Endothelial cell of umbilical vein (primary cell): ENCODE measurements at regions of chr14 and their contacts with region 1.

Region 1: DNA sequence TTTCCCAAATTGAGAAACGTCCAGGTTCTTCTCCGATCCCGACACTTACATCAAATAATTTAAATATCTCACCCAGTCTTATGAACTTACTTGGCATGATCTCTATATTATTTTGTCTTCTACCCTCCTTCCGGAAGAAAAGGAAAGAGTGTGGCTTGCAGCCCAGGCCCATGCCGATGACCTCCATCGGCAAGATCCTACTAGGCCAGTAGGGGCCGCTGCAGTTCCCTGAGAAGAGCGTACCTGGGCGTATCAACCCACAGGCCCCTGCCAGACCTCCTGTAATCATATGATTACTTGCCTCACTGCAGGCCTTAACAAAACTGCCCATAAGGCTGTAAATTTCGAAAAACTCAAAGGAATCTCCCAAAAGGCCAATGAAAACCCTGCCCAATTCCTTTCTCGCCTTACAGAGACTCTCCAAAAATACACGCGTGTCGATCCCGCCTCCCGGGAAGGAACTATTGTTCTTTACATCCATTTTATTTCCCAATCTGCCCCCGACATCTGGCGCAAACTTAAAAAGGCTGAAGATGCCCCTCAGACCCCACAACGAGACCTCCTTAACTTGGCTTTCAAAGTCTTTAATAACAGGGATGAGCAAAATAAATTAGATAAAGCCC is 69.6 kb downstream of the MOK start:
- DNase-seq: peak; percentile 72
- H3K4me3 ChIP-seq: no peak overlapping the region
- H3K27ac ChIP-seq: no peak overlapping the region
- H3K4me1 ChIP-seq: peaks cover 3% of the 10 kb centered on the region
- H3K27me3 ChIP-seq: no peaks in the 10 kb centered on the region
- CTCF ChIP-seq: peak; percentile 84 to 89
- POLR2A ChIP-seq: no peak

Region 2: DNA sequence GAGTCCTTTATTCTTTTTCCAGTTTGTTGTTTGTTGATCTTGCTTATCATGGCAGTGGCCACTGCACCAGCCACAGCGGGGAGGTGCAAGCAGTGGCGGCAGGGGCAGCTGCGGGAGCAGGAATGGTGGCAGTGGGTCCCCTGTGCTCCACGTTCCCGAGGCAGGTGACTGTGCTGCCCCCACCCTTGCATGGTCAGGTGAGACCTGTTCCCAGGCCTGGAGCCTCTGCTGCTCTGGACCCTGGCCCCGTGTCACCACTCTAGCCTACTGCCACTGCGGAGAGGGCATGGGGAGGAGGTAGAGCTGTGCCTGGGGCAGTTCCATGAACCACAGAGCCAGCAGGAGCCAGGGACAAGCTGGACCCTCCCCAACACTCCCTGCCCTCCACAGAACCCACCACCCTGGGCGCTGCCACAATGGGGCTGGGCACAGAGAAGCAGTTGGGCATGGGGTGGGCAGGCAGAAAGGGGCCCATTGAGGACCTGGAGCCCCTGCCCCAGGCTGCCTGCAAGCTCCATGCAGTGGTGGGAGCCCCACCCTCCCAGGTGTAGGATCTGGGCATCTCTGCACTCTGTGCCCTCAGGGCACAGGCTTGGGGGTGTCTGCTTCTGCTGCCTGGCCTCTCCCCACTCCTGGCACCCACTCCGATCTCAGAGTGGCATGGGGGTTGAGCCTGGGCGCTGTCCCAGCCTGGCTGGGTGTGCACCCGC is 118.9 kb before region 1 on chr14:
- CTCF ChIA-PET with region 1: no interaction called
- POLR2A ChIA-PET with region 1: no interaction called
- dilution Hi-C with region 1: no loop called
- intact Hi-C with region 1: no loop called
- DNase-seq: no peak
- H3K4me3 ChIP-seq: no peak overlapping the region
- H3K27ac ChIP-seq: no peak overlapping the region
- H3K4me1 ChIP-seq: no peaks in the 10 kb centered on the region
- H3K27me3 ChIP-seq: no peaks in the 10 kb centered on the region
- CTCF ChIP-seq: no peak
- POLR2A ChIP-seq: no peak

Region 3: DNA sequence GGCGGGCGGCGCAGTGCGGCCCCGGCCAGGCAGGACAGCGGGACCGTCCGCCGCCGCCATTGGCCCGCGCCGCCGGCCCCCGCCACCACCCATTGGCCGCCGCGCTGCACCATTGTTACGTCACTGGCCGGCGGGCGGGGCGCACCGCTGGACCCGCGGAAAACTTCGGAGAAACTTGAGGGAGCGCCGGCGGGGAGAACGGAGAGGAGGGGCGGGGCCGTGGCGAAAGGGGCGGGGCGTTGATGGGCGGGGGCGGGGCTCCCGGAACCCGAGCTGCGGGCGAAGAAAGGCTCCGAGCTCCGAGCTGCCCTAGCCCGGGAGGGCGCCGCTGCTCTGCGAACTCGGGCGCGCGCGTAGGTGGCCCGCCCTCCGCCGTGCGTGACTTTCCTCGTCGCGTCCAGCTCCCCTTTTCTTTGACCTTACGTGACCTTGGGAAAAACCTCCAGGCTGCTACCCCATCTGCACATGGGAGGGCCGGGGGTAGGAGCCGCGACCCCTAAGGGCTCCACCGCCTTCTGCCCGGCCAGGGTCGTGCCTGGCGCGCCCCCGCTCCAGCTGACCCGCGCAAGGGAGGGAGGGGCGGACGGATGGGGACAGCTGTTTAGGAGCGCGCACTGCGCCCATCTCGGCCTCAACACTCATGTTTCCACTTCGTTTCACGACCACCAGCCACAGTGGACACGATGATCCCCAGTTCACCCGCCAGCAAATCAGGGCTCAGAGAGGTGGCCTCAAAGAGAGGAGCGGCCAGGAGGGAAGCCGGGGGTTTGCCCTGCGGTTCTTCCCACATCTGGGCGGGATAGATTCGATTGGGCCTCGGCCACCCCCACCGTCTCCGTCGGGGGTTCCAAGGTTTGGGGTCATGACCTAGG is 274.6 kb after region 1 on chr14 and contains the start of gene ANKRD9:
- CTCF ChIA-PET with region 1: no interaction called
- POLR2A ChIA-PET with region 1: no interaction called
- dilution Hi-C with region 1: no loop called
- intact Hi-C with region 1: loop called (anchors 10 kb)
- DNase-seq: peak; percentile 94
- H3K4me3 ChIP-seq: peak within 1 kb of the TSS; percentile 3 to 60 (median 57)
- H3K27ac ChIP-seq: peak within 1 kb of the TSS; percentile 63
- H3K4me1 ChIP-seq: peaks cover 6% of the 10 kb centered on the region
- H3K27me3 ChIP-seq: no peaks in the 10 kb centered on the region
- CTCF ChIP-seq: no peak
- POLR2A ChIP-seq: no peak
- total RNA-seq, gene ANKRD9: 24.6 and 25.9 TPM in 2 replicates